Caco-2 (cell line): ENCODE measurements at regions of chr5 and their contacts with region 1.

Region 1: GRCh38 chr5:4989118-4989517 is 151.0 kb upstream of the ADAMTS16 start:
- DNase-seq: peak in 1 of 2 experiments; percentile 34
- H3K4me3 ChIP-seq: no peak overlapping the region
- H3K4me3 Mint-ChIP-seq: no peak overlapping the region
- H3K27ac Mint-ChIP-seq: peak overlapping the region; percentile 76
- H3K4me1 ChIP-seq: peaks cover 30% of the 10 kb centered on the region
- H3K4me1 Mint-ChIP-seq: peaks cover 15% of the 10 kb centered on the region
- H3K27me3 ChIP-seq: no peaks in the 10 kb centered on the region
- H3K27me3 Mint-ChIP-seq: no peaks in the 10 kb centered on the region
- CTCF ChIP-seq: no peak

Region 2: DNA sequence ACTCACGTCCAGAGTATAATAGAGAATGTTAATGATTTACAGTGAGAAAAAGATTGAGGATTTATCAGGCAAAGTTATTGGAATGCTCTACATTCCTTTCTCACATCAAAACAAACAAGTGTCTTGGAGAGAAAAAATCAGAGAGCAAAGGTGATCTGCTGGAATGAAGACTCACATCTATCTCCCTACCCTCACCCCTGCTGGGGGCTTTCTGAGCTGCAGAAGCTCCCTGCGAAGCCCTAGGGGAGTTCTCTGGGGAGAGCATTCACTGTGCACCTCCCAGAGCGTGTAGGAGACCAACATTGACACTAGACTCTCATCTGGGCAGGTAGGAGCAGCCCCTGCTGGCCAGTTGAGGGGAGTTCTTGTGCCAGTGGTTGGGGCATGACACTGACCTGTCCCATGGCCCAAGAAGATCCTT is 74.4 kb after region 1 on chr5:
- CTCF ChIA-PET with region 1: interaction called, 3 read pairs
- POLR2A ChIA-PET with region 1: no interaction called
- intact Hi-C with region 1: loop called (anchors 1 kb)
- DNase-seq: peak; percentile 86 to 88
- H3K4me3 ChIP-seq: no peak overlapping the region
- H3K4me3 Mint-ChIP-seq: peak overlapping the region; percentile 32
- H3K27ac Mint-ChIP-seq: peak overlapping the region; percentile 93
- H3K4me1 ChIP-seq: peaks cover 52% of the 10 kb centered on the region
- H3K4me1 Mint-ChIP-seq: peaks cover 38% of the 10 kb centered on the region
- H3K27me3 ChIP-seq: no peaks in the 10 kb centered on the region
- H3K27me3 Mint-ChIP-seq: no peaks in the 10 kb centered on the region
- CTCF ChIP-seq: peak; percentile 48 to 49

Region 3: DNA sequence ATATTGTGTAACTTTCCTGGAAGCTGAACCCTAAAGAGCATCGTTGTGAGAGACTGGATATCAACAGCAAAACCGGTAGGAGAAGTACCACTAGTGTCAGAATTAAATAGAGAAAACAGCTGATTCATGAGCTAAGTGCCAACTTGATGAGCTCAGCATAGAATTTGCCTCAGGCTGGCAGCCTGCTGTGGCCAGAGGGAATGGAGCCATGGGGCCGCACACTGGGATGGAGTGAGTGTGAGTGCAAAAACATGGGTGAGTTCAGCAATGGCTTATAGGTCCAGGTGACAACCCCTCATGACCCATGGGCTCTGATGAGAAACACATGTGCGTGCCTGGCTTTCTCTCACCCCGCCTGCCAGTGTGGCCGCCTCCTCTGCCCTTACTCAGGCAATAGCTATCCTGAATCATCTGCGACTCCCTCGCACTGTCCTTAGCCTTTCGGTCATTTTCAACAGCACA is 176.5 kb after region 1 on chr5:
- CTCF ChIA-PET with region 1: no interaction called
- POLR2A ChIA-PET with region 1: no interaction called
- intact Hi-C with region 1: no loop called
- DNase-seq: no peak
- H3K4me3 ChIP-seq: no peak overlapping the region
- H3K4me3 Mint-ChIP-seq: no peak overlapping the region
- H3K27ac Mint-ChIP-seq: no peak overlapping the region
- H3K4me1 ChIP-seq: no peaks in the 10 kb centered on the region
- H3K4me1 Mint-ChIP-seq: no peaks in the 10 kb centered on the region
- H3K27me3 ChIP-seq: no peaks in the 10 kb centered on the region
- H3K27me3 Mint-ChIP-seq: no peaks in the 10 kb centered on the region
- CTCF ChIP-seq: no peak